SK-N-SH (cell line): ENCODE measurements at regions of chr11 and their contacts with region 1.

Region 1: GRCh38 chr11:34174412-34175041 is 69.1 kb downstream of the NAT10 start:
- DNase-seq: peak; percentile 95
- H3K4me3 ChIP-seq: peak overlapping the region; percentile 27 to 47; a peak in 2 of 4 replicates
- H3K27ac ChIP-seq: no peak overlapping the region
- H3K4me1 ChIP-seq: peaks cover 5 to 10% of the 10 kb centered on the region in 2 experiments; a peak in 2 of 4 replicates
- H3K27me3 ChIP-seq: no peaks in the 10 kb centered on the region
- CTCF ChIP-seq: peak; percentile 90
- EP300 ChIP-seq: no peak; a peak in 2 of 4 replicates
- RAD21 ChIP-seq: peak; percentile 93

Region 2: DNA sequence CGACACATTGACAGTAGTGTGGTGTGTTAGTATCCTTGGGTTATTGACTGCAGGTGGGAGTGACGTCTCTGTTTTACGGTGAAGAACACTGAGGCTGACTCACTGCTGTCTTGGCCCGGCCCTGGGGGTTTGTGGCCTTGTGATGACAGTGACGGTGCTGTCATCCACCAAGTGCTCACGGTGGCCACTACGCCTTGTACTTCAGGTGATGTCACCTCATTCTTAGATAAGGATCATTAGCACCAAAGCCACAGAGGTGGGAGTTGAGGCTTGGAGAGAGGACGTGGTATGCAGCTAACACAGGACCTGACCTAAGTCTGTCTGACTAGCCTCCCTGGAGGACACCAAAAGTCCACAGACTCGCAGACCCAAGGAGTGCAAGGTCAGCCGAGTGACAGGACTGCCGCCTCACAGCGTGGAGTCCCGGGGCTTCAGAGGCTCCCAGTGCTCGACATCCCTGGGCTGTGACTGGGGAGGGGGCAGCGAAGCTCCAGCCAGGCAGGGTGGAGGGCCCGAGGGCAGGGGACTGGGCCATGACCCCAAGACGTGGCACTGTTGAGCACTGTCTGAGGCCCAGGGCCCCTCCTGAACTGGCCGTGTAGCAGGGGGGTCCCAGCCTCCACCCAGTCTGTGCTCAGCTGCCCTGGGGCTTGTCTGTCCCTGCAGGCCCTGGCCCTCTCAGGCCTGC is 12.6 kb before region 1 on chr11:
- CTCF ChIA-PET with region 1: interaction called, 51 read pairs
- POLR2A ChIA-PET with region 1: no interaction called
- DNase-seq: no peak
- H3K4me3 ChIP-seq: no peak overlapping the region
- H3K27ac ChIP-seq: peak overlapping the region in 1 of 2 experiments; percentile 34; a peak in 1 of 4 replicates
- H3K4me1 ChIP-seq: peaks cover 0 to 60% of the 10 kb centered on the region in 2 experiments; a peak in 1 of 4 replicates
- H3K27me3 ChIP-seq: no peaks in the 10 kb centered on the region
- CTCF ChIP-seq: no peak
- EP300 ChIP-seq: no peak
- RAD21 ChIP-seq: no peak

Region 3: DNA sequence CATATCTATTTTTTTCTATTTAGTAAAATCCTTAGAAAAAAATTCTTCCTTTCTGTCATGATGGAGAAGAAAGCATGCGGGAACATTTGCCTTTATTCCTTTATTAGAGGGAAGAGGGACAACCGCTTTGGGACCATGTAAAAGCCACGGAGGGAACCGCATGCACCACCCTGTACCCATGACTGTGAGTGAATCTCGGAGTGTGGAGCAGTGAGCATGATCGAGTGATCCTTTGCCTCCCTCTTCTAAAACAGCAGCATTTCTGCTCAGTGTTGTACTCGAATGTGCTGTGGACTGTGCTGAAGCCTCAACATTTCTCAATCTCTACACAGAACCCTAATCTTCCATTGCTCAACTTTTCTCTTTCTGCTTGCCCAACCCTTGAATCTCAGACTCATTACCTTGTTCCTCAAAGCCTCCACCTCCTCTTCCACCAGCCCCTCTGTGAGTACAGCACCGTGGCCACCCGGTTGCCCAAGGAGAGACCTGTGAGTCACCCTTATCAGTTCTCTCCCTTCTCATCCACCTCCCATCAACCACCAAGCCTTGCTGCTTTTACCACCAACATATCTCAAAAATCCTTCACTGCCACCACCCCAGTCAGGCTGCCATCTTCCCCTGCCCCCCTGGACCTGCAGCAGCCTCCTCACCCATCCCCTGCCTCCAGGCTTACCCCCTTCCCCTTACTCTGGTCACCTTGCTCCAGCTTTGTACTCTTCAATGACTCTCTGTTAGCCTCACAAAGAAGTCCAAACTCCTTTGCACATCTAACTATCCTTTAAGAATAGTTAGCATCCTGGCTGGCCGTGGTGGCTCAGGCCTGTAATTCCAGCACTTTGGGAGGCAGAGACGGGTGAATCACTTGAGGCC is 34.0 kb after region 1 on chr11:
- CTCF ChIA-PET with region 1: interaction called, 18 read pairs
- POLR2A ChIA-PET with region 1: no interaction called
- DNase-seq: no peak
- H3K4me3 ChIP-seq: no peak overlapping the region
- H3K27ac ChIP-seq: no peak overlapping the region
- H3K4me1 ChIP-seq: peaks cover 7 to 41% of the 10 kb centered on the region in 2 experiments; a peak in 2 of 4 replicates
- H3K27me3 ChIP-seq: no peaks in the 10 kb centered on the region
- CTCF ChIP-seq: no peak
- EP300 ChIP-seq: no peak
- RAD21 ChIP-seq: no peak

Region 4: DNA sequence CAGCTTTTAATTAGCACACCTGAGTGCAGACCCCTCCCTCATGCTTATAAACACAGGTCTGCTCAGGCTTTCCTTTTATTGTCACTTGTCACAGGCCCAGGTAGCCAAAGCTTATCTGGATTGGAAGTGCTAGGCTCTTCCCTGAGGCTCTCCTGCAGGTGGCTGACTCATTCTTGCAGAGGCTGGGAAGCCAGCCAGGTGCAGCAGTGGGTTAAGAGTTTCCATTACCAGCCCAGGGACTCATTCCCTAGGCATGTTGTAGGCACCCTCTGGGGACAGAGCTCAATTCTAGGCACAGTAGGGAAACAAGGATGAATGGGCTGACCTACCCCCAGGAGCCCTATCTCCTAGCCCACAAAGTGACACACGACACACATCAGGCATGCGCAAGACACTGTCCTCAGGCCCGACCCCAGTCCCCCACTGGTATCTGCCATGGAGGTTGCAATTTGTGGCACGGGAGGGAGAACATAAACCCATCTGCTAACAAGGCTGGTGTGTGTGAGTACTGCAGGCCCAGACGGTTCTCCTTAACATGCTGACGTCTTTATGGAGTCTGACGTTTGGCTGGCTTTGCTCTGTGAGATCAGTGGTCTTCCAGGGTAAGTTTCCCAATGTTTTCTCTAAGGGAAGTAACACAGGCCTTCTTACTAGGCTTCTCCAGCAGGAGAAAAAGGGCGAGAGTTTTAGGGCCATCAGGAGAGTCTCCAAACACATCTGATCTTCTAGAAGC is 89.1 kb after region 1 on chr11:
- CTCF ChIA-PET with region 1: interaction called, 31 read pairs
- POLR2A ChIA-PET with region 1: interaction called, 3 read pairs
- DNase-seq: no peak
- H3K4me3 ChIP-seq: no peak overlapping the region
- H3K27ac ChIP-seq: peak overlapping the region in 1 of 2 experiments; percentile 86; a peak in 2 of 4 replicates
- H3K4me1 ChIP-seq: peaks cover 55 to 63% of the 10 kb centered on the region in 2 experiments
- H3K27me3 ChIP-seq: no peaks in the 10 kb centered on the region
- CTCF ChIP-seq: no peak
- EP300 ChIP-seq: peak in 1 of 2 experiments; percentile 74; a peak in 1 of 4 replicates
- RAD21 ChIP-seq: no peak

Region 5: DNA sequence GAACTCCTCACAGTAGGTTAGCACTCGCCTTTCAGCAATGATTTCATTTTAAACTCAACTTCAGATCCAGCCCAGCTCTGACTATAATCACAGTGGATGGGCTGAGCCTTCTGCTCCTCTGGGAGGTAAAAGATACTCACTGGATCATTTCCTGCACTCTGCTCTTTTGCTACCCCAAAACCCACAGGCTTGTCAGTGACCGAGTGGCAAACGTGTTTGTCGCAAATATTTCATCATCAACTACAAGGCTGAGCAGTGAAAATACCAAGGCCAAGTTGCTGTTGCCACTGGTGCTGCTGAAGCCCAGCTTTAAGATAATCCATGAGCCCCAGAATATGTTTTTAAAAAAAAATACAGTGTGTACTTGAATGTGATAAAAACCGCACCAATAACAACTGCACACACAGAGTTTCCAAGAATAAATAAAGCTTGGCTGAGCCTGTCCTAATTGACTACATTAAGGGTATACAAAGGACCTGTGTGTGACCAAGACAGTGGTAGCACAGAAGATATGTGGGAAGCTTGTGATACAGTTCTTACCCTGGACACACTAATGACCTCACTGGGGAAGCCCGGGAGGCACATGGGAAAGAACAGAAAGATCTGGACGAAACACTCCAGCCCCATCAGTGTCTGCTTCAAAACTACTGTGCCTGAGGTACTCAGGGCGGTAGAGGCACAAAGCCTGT is 142.0 kb after region 1 on chr11:
- CTCF ChIA-PET with region 1: interaction called, 10 read pairs
- POLR2A ChIA-PET with region 1: no interaction called
- DNase-seq: no peak
- H3K4me3 ChIP-seq: no peak overlapping the region
- H3K27ac ChIP-seq: peak overlapping the region in 1 of 2 experiments; percentile 88; a peak in 2 of 4 replicates
- H3K4me1 ChIP-seq: peaks cover 5 to 41% of the 10 kb centered on the region in 2 experiments; a peak in 3 of 4 replicates
- H3K27me3 ChIP-seq: no peaks in the 10 kb centered on the region
- CTCF ChIP-seq: no peak
- EP300 ChIP-seq: no peak
- RAD21 ChIP-seq: no peak

Region 6: DNA sequence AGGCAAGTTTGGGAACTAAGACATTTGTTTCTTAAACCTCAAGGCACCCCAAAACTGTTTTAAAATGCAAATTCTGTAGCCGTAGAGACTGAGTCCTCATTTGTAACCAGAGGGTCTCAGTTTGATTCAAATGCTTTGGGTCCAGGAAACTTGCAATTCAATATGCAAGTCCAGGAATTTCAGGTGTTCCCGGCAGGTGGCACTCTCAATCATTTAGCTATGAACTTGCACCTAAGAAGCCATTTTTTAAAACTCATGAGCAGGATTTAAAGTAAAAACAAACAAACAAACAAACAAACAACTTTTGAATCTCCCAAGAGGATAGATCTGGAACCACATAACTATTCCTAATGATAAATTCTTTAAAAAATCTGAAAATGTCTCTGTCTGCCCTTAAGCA is 192.0 kb after region 1 on chr11:
- CTCF ChIA-PET with region 1: interaction called, 61 read pairs
- POLR2A ChIA-PET with region 1: no interaction called
- DNase-seq: peak; percentile 36
- H3K4me3 ChIP-seq: no peak overlapping the region
- H3K27ac ChIP-seq: no peak overlapping the region
- H3K4me1 ChIP-seq: peaks cover 0 to 7% of the 10 kb centered on the region in 2 experiments; a peak in 2 of 4 replicates
- H3K27me3 ChIP-seq: no peaks in the 10 kb centered on the region
- CTCF ChIP-seq: peak; percentile 42
- EP300 ChIP-seq: no peak
- RAD21 ChIP-seq: peak; percentile 59

Region 7: GRCh38 chr11:34499719-34500495 is 325.4 kb after region 1 on chr11:
- CTCF ChIA-PET with region 1: no interaction called
- POLR2A ChIA-PET with region 1: no interaction called
- DNase-seq: no peak
- H3K4me3 ChIP-seq: no peak overlapping the region
- H3K27ac ChIP-seq: no peak overlapping the region
- H3K4me1 ChIP-seq: peaks cover 0 to 2% of the 10 kb centered on the region in 2 experiments; a peak in 1 of 4 replicates
- H3K27me3 ChIP-seq: no peaks in the 10 kb centered on the region; the same call in 1 of the 2 replicates
- CTCF ChIP-seq: no peak
- EP300 ChIP-seq: no peak
- RAD21 ChIP-seq: no peak

Region 8: DNA sequence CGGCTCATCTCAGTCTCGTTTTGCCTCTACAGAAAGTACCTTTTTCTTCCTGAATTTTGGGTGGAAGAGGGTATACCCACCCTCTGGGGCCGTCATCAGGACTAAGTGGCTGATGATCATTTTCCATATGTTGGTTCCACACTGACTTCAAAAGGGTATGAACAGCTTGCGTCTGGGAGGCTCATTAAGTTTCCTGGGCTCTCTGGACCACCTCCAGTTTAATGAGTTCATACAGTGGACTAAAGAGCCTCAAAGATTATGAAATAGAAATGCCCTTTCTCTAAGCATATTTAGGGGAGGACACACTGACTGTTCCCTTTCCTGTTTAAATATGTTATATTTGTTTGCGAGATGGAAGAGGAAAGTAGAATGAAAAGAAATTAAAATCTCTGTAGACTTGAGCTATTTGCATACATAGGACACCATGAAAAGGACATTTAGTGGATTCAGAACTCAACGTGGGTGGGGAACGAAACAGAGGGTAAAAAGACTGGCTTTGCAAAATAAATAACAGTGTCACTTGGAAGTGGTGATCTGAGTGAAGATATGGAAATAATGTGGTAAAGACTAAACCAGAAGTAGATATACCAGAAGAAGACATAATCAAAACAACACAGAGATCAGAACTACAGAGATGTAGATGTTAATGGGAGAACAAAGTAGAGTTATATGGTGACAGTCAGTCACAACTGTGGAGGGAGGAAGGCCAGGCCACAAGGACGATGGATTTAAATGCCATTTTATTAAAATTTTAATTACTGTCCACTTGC is 1788.0 kb after region 1 on chr11:
- CTCF ChIA-PET with region 1: no interaction called
- POLR2A ChIA-PET with region 1: no interaction called
- DNase-seq: no peak
- H3K4me3 ChIP-seq: no peak overlapping the region
- H3K27ac ChIP-seq: no peak overlapping the region
- H3K4me1 ChIP-seq: peaks cover 0 to 21% of the 10 kb centered on the region in 2 experiments; a peak in 2 of 4 replicates
- H3K27me3 ChIP-seq: no peaks in the 10 kb centered on the region
- CTCF ChIP-seq: no peak
- EP300 ChIP-seq: no peak
- RAD21 ChIP-seq: no peak